Activated CD4-positive, alpha-beta T cell treated with anti-CD3 and anti-CD28 coated beads, Interleukin-2, amount 10 ng/mL, durations not matched to agents 24 days and 14 days (primary cell): ENCODE measurements at regions of chr6 and their contacts with region 1.

Region 1: DNA sequence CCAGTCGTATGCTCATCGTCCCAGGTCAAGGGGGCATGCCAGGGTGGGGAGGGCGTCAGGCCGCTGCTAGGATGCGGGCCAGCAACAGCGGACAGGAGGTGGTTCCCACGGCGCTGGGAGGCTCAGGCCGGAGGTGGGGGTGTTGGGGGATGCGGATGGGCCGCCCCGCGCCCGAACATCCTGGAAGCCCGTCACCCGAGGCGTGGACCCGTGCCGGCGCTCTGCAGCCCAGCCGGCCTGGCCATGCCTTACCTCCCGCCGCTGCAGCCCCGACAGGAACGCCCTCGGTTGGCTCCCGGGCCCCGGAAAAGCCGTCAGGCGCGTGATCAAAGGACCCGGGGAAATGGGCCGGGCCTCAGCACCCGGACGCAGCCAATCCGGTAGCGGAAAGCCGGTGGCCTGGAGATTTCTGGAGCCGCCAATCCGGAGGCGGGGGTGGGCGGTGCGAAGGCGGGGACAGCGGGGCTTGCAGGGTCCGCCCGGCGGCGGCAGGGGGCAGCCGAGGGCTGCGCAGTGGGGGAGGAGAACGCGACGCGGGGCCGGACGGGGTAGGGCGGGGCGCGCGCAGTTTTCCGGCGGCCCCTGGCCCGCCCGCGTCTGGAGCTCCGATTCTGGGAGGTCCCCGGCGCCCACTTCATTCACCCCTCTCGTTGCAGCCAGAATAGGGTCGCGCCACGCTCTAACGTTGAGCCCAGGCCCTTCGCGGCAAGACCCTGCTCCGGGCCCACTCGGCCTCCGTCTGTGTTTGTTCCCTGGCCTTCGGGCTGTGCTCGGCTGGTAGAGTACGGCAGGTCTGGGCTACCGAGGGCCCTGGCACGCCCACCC is at the start of gene SMIM29:
- DNase-seq: peak; percentile 99
- H3K4me3 Mint-ChIP-seq: peak within 1 kb of the TSS; percentile 88
- H3K27ac Mint-ChIP-seq: peak within 1 kb of the TSS; percentile 93
- H3K4me1 Mint-ChIP-seq: peaks cover 39% of the 10 kb centered on the region
- H3K27me3 Mint-ChIP-seq: peaks cover 8% of the 10 kb centered on the region
- total RNA-seq, gene SMIM29: 12.6 and 13.5 TPM in 2 replicates

Region 2: DNA sequence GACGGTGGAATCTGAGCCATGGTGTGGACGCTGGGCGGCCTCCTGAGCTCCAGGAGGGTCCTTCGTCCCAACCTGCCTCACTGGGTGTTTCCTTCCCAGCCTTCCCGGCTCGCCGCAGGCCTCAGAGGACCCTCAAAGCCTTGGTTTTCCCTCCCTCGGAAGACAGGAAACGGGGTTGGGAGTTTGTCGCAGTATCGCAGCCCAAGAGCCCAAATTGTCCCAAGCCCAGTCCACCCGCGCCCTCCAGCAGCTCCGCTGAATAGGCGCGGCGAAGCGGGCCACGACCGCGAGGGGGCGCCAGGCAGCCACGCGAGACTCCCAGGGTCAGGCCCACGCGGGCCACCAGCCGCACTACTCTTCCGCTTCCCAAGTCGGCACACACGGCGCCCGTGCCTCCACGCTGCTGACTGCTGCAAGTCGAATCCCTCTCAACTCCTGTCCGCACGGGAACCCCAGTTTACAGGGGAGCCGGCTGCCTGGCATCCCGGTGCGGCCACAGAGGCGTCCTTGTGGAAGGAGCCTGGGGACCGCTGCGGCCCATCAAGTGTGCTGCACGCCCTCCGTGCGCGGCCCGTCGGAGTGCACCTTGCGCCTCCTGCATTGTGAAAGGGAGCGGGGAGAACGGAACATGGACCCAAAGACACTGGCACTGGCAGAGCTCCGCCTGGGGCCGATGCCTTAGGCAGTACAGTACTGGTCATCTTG is 52.7 kb before region 1 on chr6:
- intact Hi-C with region 1: loop called (anchors 1 kb)
- DNase-seq: peak; percentile 97
- H3K4me3 Mint-ChIP-seq: peak overlapping the region; percentile 80
- H3K27ac Mint-ChIP-seq: peak overlapping the region; percentile 48
- H3K4me1 Mint-ChIP-seq: peaks cover 9% of the 10 kb centered on the region
- H3K27me3 Mint-ChIP-seq: peaks cover 14% of the 10 kb centered on the region

Region 3: DNA sequence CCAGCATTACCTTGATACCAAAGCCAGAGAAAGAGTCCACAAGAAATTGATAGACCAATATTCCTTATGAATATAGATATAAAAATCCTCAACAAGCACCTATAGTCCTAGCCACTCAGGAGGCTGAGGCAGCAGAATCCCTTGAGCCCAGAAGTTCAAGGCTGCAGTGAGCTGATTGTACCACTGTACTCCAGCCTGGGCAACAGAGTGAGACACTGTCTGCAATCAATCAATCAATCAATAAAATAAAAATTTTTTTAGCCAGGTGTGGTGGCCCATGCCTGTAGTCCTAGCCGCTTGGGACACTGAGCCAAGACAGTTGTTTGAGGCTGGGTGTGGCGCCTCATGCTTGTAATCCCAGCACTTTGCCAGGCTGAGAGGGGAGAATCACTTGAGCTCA is 18.8 kb after region 1 on chr6:
- intact Hi-C with region 1: no loop called
- DNase-seq: no peak
- H3K4me3 Mint-ChIP-seq: no peak overlapping the region
- H3K27ac Mint-ChIP-seq: no peak overlapping the region
- H3K4me1 Mint-ChIP-seq: peaks cover 3% of the 10 kb centered on the region
- H3K27me3 Mint-ChIP-seq: peaks cover 4% of the 10 kb centered on the region

Region 4: GRCh38 chr6:34392497-34393190 is 143.7 kb after region 1 on chr6 and contains the start of gene NUDT3:
- intact Hi-C with region 1: loop called (anchors 1 kb)
- DNase-seq: peak; percentile 98
- H3K4me3 Mint-ChIP-seq: no peak within 1 kb of the TSS
- H3K27ac Mint-ChIP-seq: no peak within 1 kb of the TSS
- H3K4me1 Mint-ChIP-seq: peaks cover 9% of the 10 kb centered on the region
- H3K27me3 Mint-ChIP-seq: no peaks in the 10 kb centered on the region
- total RNA-seq, gene NUDT3: 21.2 and 21.8 TPM in 2 replicates

Region 5: DNA sequence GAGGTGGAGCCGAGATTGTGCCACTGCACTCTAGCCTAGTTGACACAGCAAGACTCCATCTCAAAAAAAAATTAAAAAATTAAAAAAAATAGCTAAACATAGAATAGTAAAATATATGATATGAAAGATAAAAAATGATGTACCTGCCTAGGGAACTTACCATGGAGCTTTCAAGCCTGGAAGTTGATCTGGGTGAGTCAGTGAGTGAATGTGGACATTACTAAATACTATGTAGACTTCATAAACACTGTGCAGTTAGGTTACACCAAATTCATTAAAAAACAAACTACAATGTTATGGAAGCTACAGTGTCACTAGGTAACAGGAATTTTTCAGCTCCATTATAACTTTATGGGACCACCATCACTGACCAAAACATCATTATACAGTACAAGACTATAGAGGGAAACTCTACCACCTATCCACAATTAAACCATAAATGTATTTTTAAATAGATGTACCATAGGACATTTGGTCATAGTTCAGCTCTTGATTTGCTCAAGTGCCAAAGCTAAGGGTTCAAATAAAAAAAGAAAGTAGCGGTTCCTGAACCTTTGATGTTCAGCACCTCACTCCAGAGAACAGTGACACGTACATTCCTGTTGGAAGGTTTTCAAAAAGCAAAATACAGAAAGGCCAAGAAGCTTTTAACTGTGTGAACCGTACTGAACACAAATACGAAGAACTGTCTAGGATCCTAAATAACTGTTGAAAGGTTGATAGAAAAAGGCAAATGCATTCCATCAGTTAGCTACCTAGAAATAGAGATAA is 359.6 kb after region 1 on chr6:
- intact Hi-C with region 1: loop called (anchors 1 kb)
- DNase-seq: no peak
- H3K4me3 Mint-ChIP-seq: no peak overlapping the region
- H3K27ac Mint-ChIP-seq: no peak overlapping the region
- H3K4me1 Mint-ChIP-seq: peaks cover 11% of the 10 kb centered on the region
- H3K27me3 Mint-ChIP-seq: no peaks in the 10 kb centered on the region

Region 6: GRCh38 chr6:34696739-34697543 is 448.0 kb after region 1 on chr6 and contains the start of gene ILRUN:
- intact Hi-C with region 1: loop called (anchors 2 kb)
- DNase-seq: peak; percentile 99
- H3K4me3 Mint-ChIP-seq: peak within 1 kb of the TSS; percentile 90
- H3K27ac Mint-ChIP-seq: peak within 1 kb of the TSS; percentile 95
- H3K4me1 Mint-ChIP-seq: peaks cover 35% of the 10 kb centered on the region
- H3K27me3 Mint-ChIP-seq: no peaks in the 10 kb centered on the region
- total RNA-seq, gene ILRUN: 65.4 and 67.2 TPM in 2 replicates